HCT116 (cell line): ENCODE measurements at regions of chr6 and their contacts with region 1.

Region 1: GRCh38 chr6:52162940-52163908 is 23.0 kb upstream of the IL17A start:
- DNase-seq: peak; percentile 54
- ATAC-seq: peak; percentile 91
- H3K4me3 ChIP-seq: no peak overlapping the region
- H3K27ac ChIP-seq: no peak overlapping the region
- H3K4me1 ChIP-seq: no peaks in the 10 kb centered on the region
- H3K27me3 ChIP-seq: no peaks in the 10 kb centered on the region
- CTCF ChIP-seq: peak; percentile 73 to 85 (median 84)
- POLR2A ChIP-seq: no peak
- RAD21 ChIP-seq: peak; percentile 91

Region 2: DNA sequence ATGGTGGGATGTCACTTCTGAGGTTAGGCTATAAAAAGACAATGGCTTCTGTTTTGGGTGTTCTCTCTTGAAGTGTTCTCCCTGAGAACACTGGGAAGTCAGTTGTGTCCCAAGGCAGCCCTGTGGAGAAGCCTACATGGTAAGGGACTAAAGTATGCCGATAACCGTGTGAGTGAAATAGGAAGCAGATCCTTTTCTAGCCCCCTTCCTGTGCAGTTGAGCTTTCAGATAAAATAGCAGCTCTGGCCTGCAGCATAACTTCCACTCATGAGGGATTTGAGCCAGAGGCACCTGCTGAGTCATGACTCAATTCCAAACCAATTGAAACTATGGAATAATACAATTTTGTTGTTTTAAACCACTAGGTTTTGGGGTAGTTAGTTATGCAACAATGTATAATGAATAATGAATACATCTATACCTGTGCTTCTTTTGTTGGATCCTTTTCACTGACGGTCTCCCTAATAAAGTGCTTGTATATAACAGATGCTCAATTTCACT is 1102.9 kb before region 1 on chr6:
- CTCF ChIA-PET with region 1: no interaction called
- POLR2A ChIA-PET with region 1: no interaction called
- RAD21 ChIA-PET with region 1: no interaction called
- intact Hi-C with region 1: no loop called
- DNase-seq: no peak
- ATAC-seq: no peak
- H3K4me3 ChIP-seq: no peak overlapping the region
- H3K27ac ChIP-seq: no peak overlapping the region
- H3K4me1 ChIP-seq: no peaks in the 10 kb centered on the region
- H3K27me3 ChIP-seq: no peaks in the 10 kb centered on the region
- CTCF ChIP-seq: no peak
- POLR2A ChIP-seq: no peak
- RAD21 ChIP-seq: no peak

Region 3: GRCh38 chr6:51855310-51856082 is 307.7 kb before region 1 on chr6:
- CTCF ChIA-PET with region 1: no interaction called
- POLR2A ChIA-PET with region 1: no interaction called
- RAD21 ChIA-PET with region 1: no interaction called
- intact Hi-C with region 1: no loop called
- DNase-seq: peak; percentile 41
- ATAC-seq: peak; percentile 73
- H3K4me3 ChIP-seq: no peak overlapping the region
- H3K27ac ChIP-seq: no peak overlapping the region
- H3K4me1 ChIP-seq: no peaks in the 10 kb centered on the region
- H3K27me3 ChIP-seq: no peaks in the 10 kb centered on the region
- CTCF ChIP-seq: peak; percentile 34 to 81 (median 63); a peak in 4 of 6 replicates
- POLR2A ChIP-seq: no peak
- RAD21 ChIP-seq: peak; percentile 39; the same call in 1 of the 2 replicates

Region 4: GRCh38 chr6:51996296-51996947 is 166.8 kb before region 1 on chr6:
- CTCF ChIA-PET with region 1: no interaction called
- POLR2A ChIA-PET with region 1: no interaction called
- RAD21 ChIA-PET with region 1: no interaction called
- intact Hi-C with region 1: no loop called
- DNase-seq: no peak
- ATAC-seq: no peak
- H3K4me3 ChIP-seq: no peak overlapping the region
- H3K27ac ChIP-seq: no peak overlapping the region
- H3K4me1 ChIP-seq: no peaks in the 10 kb centered on the region
- H3K27me3 ChIP-seq: peaks cover 9% of the 10 kb centered on the region
- CTCF ChIP-seq: no peak
- POLR2A ChIP-seq: no peak
- RAD21 ChIP-seq: no peak

Region 5: DNA sequence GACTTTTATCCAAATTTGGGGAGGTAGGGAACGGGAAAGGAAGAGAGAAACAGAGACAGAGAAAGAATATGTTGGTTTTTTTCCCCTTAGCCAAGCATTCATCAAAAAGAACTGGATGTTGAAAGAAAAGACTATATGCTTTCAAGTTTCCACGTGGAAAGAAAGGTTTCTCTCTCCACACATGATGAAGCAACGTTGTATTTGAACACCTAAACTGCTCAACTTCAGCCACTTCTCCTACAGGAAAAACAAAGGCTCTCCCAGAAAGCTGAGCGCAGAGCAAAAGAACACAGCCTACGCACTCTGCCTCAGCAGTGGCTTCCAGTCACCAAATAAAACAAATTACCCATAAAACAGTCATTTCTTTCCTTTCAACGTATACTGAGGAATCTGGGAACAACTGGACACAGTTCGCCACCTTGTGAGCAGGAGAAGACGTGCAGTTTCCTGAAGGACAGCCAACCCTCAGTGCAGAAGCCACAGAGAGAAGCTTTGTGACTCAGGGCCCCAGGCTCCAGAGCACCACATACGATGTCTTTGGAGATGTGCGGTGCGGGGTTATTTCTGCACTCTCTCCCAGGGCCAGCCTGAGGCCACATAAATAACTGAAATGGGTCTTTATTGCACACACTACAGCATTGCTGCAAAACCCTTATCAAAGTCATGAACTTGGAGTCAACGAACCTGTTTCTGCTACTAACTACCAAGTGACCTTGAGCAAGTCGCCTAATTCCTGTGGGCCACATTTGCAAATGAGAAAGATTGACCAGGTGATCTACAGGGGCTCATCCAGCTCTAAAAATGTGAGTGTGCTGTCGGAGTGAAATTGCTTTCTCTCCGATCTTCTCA is 71.0 kb after region 1 on chr6:
- CTCF ChIA-PET with region 1: interaction called, 21 read pairs
- POLR2A ChIA-PET with region 1: no interaction called
- RAD21 ChIA-PET with region 1: no interaction called
- intact Hi-C with region 1: loop called (anchors 1 kb)
- DNase-seq: peak; percentile 52
- ATAC-seq: peak; percentile 99
- H3K4me3 ChIP-seq: no peak overlapping the region
- H3K27ac ChIP-seq: no peak overlapping the region
- H3K4me1 ChIP-seq: peaks cover 0 to 7% of the 10 kb centered on the region in 2 experiments; a peak in 2 of 4 replicates
- H3K27me3 ChIP-seq: no peaks in the 10 kb centered on the region
- CTCF ChIP-seq: peak; percentile 62 to 77 (median 72); a peak in 5 of 6 replicates
- POLR2A ChIP-seq: no peak
- RAD21 ChIP-seq: peak; percentile 80

Region 6: DNA sequence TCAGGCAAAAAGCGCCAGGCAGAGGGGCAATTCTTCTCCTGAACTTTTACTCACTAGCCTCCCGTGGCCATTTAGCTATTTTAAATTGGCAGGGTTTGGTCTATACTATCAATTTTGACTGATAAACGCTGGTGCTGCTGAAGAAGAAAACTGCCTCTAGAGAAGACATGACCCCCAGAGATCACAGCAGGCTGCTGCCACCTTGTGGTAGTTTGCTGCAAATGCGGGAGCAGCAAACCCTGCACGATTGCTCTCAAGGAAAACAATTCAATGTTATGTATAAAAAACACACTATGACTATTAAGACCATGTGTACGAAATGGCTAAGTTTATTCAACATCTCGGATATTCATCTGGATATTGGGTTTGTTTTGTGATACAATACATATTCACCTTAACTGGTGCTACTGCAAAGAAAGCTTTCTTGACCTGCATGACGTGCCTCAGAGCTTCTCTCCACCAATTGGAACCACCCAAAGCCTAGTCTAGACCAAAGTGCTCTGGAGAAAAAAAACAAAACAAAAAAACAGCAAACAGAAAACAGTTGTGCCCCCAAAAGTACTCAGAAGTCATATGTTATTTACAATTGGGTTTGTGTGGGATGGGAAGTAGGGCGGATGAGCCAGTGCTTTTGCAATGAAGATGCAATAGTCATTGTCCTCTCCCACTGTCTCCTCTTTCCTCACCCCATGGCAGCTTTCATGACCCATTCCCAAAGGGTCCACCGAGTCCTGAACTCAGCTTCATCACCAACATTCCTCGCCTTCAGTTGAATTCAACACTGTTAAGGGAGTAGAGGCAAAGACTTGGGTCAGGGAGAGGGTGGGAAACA is 100.7 kb after region 1 on chr6:
- CTCF ChIA-PET with region 1: interaction called, 21 read pairs
- POLR2A ChIA-PET with region 1: no interaction called
- RAD21 ChIA-PET with region 1: no interaction called
- intact Hi-C with region 1: loop called (anchors 1 kb)
- DNase-seq: no peak
- ATAC-seq: peak; percentile 75
- H3K4me3 ChIP-seq: no peak overlapping the region
- H3K27ac ChIP-seq: no peak overlapping the region
- H3K4me1 ChIP-seq: no peaks in the 10 kb centered on the region
- H3K27me3 ChIP-seq: no peaks in the 10 kb centered on the region
- CTCF ChIP-seq: peak; percentile 52 to 98 (median 98); a peak in 5 of 6 replicates
- POLR2A ChIP-seq: no peak
- RAD21 ChIP-seq: peak; percentile 68

Region 7: DNA sequence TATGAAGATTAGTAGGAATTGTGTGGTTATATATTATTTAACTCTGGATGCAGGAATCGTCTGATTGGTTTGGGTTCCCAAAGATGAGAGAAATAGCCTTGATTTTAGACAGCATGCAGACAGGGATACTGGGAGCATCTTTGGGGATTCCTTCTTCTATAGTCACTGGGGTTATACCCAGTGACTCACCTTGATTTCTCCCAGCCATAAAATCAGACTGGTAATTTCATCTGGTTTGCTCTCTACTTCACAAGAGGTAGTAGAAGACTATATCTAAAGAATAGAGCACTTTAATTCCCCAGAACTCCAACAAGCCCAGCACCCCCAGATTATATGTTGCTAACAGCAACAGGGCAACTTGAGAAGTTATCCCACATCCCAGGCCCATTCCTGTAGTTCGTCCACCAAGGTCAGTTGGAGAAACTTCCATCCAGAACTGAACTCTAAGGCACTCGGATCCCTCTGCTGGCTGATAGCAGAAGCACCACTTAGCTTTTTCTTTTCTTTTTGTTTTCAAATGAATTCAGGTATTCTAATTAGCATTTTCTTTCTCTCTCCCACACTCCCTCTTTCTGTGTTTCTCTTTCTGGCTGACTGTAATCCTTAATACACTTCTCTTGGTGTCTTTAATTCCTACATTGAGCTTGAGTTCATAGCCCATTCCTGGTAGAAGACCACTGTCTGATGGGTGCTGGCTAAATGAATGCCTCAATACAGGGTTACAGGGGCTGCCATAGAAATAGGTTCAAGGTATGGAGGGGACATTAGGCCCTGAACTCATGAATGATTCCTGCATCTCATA is 236.5 kb after region 1 on chr6:
- CTCF ChIA-PET with region 1: interaction called, 8 read pairs
- POLR2A ChIA-PET with region 1: no interaction called
- RAD21 ChIA-PET with region 1: no interaction called
- intact Hi-C with region 1: loop called (anchors 1 kb)
- DNase-seq: no peak
- ATAC-seq: peak; percentile 92
- H3K4me3 ChIP-seq: no peak overlapping the region
- H3K27ac ChIP-seq: no peak overlapping the region
- H3K4me1 ChIP-seq: peaks cover 0 to 14% of the 10 kb centered on the region in 2 experiments; a peak in 2 of 4 replicates
- H3K27me3 ChIP-seq: no peaks in the 10 kb centered on the region
- CTCF ChIP-seq: peak; percentile 77 to 88 (median 85)
- POLR2A ChIP-seq: no peak
- RAD21 ChIP-seq: peak; percentile 88